PC-3 (cell line): ENCODE measurements at regions of chr4 and their contacts with region 1.

Region 1: GRCh38 chr4:128386761-128387599 is 99.4 kb upstream of the PGRMC2 start:
- DNase-seq: peak; percentile 82
- ATAC-seq: peak; percentile 87
- H3K4me3 ChIP-seq: peak overlapping the region; percentile 7; the same call in 1 of the 2 replicates
- H3K27ac ChIP-seq: peak overlapping the region; percentile 65
- H3K4me1 ChIP-seq: peaks cover 35% of the 10 kb centered on the region
- H3K27me3 ChIP-seq: no peaks in the 10 kb centered on the region
- CTCF ChIP-seq: no peak

Region 2: DNA sequence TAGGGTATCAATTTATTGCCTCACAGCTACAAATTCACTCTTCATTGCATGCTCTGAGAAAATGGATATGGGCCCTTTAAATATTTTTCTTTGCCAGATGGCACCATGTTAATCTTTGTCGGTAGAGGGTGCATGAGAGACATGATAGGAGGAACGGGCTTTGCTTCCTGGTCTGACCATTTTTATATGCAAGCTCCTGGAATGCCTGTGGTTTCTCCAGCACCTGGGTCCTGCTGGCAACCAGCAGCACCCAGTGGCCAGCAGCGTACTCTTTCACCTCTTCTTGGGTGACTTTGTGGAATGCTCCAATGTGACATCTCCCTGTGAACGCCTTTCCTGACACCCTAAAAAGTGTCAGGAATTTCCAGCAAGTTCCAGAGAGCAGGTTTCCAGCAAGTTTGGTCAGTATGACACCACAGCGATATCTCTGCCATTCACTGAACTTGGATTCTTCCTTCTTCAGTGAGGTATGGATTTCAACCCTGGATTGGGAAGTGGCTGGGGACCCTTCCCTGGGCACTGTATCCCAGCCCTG is 40.9 kb after region 1 on chr4:
- CTCF ChIA-PET with region 1: no interaction called
- POLR2A ChIA-PET with region 1: no interaction called
- intact Hi-C with region 1: loop called (anchors 5 kb)
- DNase-seq: peak; percentile 87
- ATAC-seq: peak; percentile 100
- H3K4me3 ChIP-seq: no peak overlapping the region
- H3K27ac ChIP-seq: no peak overlapping the region
- H3K4me1 ChIP-seq: peaks cover 7% of the 10 kb centered on the region
- H3K27me3 ChIP-seq: no peaks in the 10 kb centered on the region
- CTCF ChIP-seq: peak; percentile 77

Region 3: DNA sequence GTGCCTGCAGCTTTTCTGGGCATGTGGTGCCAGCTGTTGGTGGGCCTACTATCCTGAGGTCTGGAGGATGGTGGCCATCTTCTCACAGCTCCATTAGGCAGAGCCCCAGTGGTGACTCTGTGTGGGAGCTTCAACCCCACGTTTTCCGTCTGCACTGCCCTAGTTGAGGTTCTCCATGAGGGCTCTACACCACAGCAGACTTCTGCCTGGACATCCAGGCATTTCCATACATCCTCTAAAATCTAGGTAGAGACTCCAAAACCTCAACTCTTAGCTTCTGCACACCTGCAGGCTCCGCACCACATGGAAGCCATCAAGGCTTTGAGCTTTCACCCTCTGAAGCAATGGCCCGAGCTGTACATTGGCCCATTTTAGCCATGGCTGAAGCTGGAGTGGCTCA is 53.9 kb after region 1 on chr4:
- CTCF ChIA-PET with region 1: no interaction called
- POLR2A ChIA-PET with region 1: no interaction called
- intact Hi-C with region 1: loop called (anchors 1 kb)
- DNase-seq: no peak
- ATAC-seq: no peak
- H3K4me3 ChIP-seq: no peak overlapping the region
- H3K27ac ChIP-seq: no peak overlapping the region
- H3K4me1 ChIP-seq: peaks cover 13% of the 10 kb centered on the region
- H3K27me3 ChIP-seq: no peaks in the 10 kb centered on the region
- CTCF ChIP-seq: no peak

Region 4: GRCh38 chr4:128707864-128708263 is 320.9 kb after region 1 on chr4:
- CTCF ChIA-PET with region 1: no interaction called
- POLR2A ChIA-PET with region 1: no interaction called
- intact Hi-C with region 1: no loop called
- DNase-seq: peak; percentile 42
- ATAC-seq: no peak
- H3K4me3 ChIP-seq: no peak overlapping the region
- H3K27ac ChIP-seq: no peak overlapping the region
- H3K4me1 ChIP-seq: no peaks in the 10 kb centered on the region
- H3K27me3 ChIP-seq: no peaks in the 10 kb centered on the region
- CTCF ChIP-seq: no peak